ENCODE measurements at regions of chr1 and their contacts with region 1.

Region 1: GRCh38 chr1:54764133-54764921 is at the start of gene PARS2:
- DNase-seq: peak; percentile 91
- ATAC-seq: peak; percentile 92
- H3K4me3 Mint-ChIP-seq: peak within 1 kb of the TSS; percentile 90
- H3K27ac Mint-ChIP-seq: peak within 1 kb of the TSS; percentile 89
- H3K4me1 Mint-ChIP-seq: peaks cover 24% of the 10 kb centered on the region
- H3K27me3 Mint-ChIP-seq: no peaks in the 10 kb centered on the region
- CTCF ChIP-seq: no peak
- total RNA-seq, gene PARS2: 4.3 and 4.8 TPM in 2 replicates

Region 2: GRCh38 chr1:53889304-53890298 is 874.7 kb before region 1 on chr1 and contains the start of gene YIPF1:
- CTCF ChIA-PET with region 1: no interaction called
- POLR2A ChIA-PET with region 1: no interaction called
- intact Hi-C with region 1: loop called (anchors 1 kb)
- DNase-seq: peak; percentile 81
- ATAC-seq: peak; percentile 98
- H3K4me3 Mint-ChIP-seq: peak within 1 kb of the TSS; percentile 98
- H3K27ac Mint-ChIP-seq: peak within 1 kb of the TSS; percentile 94
- H3K4me1 Mint-ChIP-seq: peaks cover 40% of the 10 kb centered on the region
- H3K27me3 Mint-ChIP-seq: no peaks in the 10 kb centered on the region
- CTCF ChIP-seq: no peak
- total RNA-seq, gene YIPF1: 16.6 and 18.5 TPM in 2 replicates

Region 3: DNA sequence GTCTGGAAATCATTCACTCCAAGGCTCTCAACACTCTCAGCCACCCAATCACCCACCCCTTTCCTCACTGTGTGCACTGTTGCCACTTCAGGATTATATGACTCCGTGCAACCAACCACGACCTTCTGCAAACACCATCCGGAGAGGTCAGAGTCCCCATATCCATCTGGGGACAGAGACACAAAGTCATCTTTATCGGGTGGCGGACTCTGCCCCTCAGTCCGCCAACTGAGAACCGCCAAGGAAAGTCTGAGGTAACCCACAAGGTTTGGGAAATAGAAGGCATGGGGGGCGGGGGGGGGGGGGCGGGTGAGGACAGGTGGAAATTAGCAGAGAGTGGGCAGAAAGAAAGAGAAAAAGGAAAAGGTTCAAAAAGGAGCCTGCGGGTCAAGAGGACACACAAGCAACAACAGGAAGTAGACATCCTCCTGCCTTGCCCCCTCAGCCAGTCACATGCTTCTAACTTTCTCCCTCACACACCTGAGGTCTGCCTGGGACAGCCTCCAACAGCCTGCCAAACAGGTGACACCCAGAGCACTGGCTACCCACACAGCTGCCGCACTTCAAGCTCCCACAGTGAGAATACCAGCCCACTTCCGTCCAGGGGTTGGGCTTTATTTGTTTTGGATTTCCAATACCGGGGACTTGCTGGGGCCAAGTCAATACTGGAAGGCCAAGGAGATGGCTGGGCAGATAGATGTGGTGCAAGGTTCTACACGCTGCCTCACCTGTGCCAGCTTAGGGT is 416.2 kb before region 1 on chr1:
- CTCF ChIA-PET with region 1: no interaction called
- POLR2A ChIA-PET with region 1: no interaction called
- intact Hi-C with region 1: no loop called
- DNase-seq: no peak
- ATAC-seq: no peak
- H3K4me3 Mint-ChIP-seq: no peak overlapping the region
- H3K27ac Mint-ChIP-seq: no peak overlapping the region
- H3K4me1 Mint-ChIP-seq: no peaks in the 10 kb centered on the region
- H3K27me3 Mint-ChIP-seq: no peaks in the 10 kb centered on the region
- CTCF ChIP-seq: no peak

Region 4: DNA sequence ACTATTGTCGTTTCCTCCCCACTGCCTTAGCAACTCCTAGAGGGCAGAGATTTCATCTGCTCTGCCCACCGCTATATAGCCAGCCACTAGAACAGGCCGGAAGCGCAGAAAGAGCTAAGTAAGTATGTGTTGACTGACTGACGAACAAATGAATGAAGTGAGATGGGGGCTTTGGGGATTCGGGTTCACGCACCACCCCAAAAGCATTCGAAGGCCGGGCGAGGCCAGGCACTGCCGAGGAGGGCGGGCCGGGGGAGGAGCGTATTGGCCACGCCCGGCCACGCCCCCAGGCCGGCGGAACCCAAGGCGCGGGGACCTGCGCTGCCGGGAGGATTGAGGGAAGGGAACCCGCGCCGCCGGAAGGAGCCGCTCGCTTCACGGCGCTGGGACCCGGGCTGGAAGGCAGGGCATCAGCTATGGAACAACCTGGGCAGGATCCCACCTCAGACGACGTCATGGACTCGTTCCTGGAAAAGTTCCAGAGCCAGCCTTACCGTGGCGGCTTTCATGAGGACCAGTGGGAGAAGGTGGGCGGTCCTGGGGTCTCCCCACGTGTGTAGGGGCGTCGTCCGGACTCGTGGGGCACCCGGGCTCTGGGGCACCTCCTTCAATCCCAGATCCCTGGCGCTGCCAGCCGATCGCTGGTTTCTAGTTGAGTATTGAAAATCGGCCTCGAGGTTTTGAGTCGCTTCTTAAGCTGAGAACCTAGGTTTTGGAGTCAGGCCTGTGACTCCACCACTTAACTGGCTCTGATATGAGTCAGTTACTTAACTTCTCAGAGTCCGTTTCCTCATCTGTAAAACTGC is 48.6 kb before region 1 on chr1 and contains the start of gene TTC4:
- CTCF ChIA-PET with region 1: no interaction called
- POLR2A ChIA-PET with region 1: interaction called, 13 read pairs
- intact Hi-C with region 1: loop called (anchors 1 kb)
- DNase-seq: peak; percentile 88
- ATAC-seq: peak; percentile 98
- H3K4me3 Mint-ChIP-seq: peak within 1 kb of the TSS; percentile 94
- H3K27ac Mint-ChIP-seq: peak within 1 kb of the TSS; percentile 83
- H3K4me1 Mint-ChIP-seq: peaks cover 30% of the 10 kb centered on the region
- H3K27me3 Mint-ChIP-seq: no peaks in the 10 kb centered on the region
- CTCF ChIP-seq: no peak
- total RNA-seq, gene TTC4: 30.8 and 31.5 TPM in 2 replicates

Region 5: DNA sequence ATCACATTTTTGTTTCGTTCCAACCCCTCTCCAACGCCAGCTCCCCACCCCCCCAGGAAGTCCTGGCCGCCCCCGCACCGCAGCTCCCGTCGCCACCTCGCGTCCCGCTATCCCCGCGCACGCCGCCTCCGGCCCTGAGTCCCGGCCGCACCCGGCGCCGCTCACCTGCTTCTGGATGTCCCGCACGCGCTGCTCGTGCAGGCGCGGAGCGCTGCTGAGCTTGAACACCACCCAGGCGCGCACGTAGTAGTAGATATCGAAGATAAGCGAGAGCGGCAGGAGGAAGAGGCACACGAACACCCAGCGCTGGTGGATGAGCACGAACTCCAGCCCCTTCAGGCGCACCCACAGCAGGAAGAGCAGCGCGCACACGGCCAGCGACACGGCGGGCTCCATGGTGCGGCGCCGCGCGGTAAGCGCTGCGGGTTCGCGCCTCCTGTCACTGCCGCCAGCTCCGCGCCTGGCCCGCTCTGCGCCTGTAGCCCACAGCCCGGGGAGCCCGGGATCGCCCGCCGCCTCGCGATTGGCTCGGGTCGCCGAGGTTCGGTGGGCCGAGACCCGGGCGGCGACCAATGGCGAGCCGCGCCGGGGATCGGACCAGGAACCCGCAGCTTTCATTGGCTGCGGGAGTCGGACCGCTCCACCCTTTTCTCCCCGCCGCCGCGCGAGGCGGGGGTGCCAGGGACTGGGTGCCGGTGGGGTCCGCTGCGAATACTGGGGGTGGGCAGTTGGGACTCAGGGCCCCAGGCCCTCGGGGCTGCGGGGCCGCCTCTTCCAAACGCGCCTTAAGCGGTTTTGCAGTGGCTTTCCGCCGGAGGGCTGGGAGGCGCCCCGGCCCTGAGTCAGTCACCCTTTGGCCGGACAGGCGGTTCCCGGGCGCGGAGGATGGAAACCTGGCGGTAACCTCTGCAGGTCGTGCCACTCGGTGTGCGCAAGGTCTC is 122.7 kb after region 1 on chr1 and contains the start of gene DHCR24:
- CTCF ChIA-PET with region 1: no interaction called
- POLR2A ChIA-PET with region 1: no interaction called
- intact Hi-C with region 1: loop called (anchors 2 kb)
- DNase-seq: peak; percentile 71
- ATAC-seq: peak; percentile 95
- H3K4me3 Mint-ChIP-seq: peak within 1 kb of the TSS; percentile 91
- H3K27ac Mint-ChIP-seq: peak within 1 kb of the TSS; percentile 54
- H3K4me1 Mint-ChIP-seq: peaks cover 23% of the 10 kb centered on the region
- H3K27me3 Mint-ChIP-seq: peaks cover 6% of the 10 kb centered on the region
- CTCF ChIP-seq: no peak
- total RNA-seq, gene DHCR24: 49.0 and 55.0 TPM in 2 replicates

Measured in activated B cell treated with CpG ODN at 0.5 μM for 24 hours (primary cell).